Sigmoid colon (tissue), 7 donors: ENCODE measurements at regions of chr6 and their contacts with region 1.

Region 1: GRCh38 chr6:107674995-107675738 is 148.9 kb downstream of the SCML4 start:
- DNase-seq: peak; percentile 91
- H3K4me3 ChIP-seq: no peak overlapping the region
- H3K27ac ChIP-seq: no peak overlapping the region
- H3K4me1 ChIP-seq: peaks cover 0 to 18% (median 7%) of the 10 kb centered on the region in 4 donors
- H3K27me3 ChIP-seq: no peaks in the 10 kb centered on the region
- CTCF ChIP-seq: peak; percentile 66 to 90 (median 78)
- EP300 ChIP-seq: no peak
- POLR2A ChIP-seq: no peak

Region 2: GRCh38 chr6:107511511-107511993 is 163.6 kb before region 1 on chr6:
- intact Hi-C with region 1: no loop called
- DNase-seq: peak; percentile 74
- H3K4me3 ChIP-seq: no peak overlapping the region
- H3K27ac ChIP-seq: peak overlapping the region in 1 of 4 donors; percentile 16
- H3K4me1 ChIP-seq: peaks cover 0 to 18% (median 6%) of the 10 kb centered on the region in 4 donors
- H3K27me3 ChIP-seq: no peaks in the 10 kb centered on the region
- CTCF ChIP-seq: no peak
- EP300 ChIP-seq: no peak
- POLR2A ChIP-seq: no peak

Region 3: GRCh38 chr6:107704347-107705013 is 29.3 kb after region 1 on chr6:
- intact Hi-C with region 1: loop called (anchors 1 kb)
- DNase-seq: no peak
- H3K4me3 ChIP-seq: no peak overlapping the region
- H3K27ac ChIP-seq: no peak overlapping the region
- H3K4me1 ChIP-seq: peaks cover 0 to 3% (median 0%) of the 10 kb centered on the region in 4 donors
- H3K27me3 ChIP-seq: no peaks in the 10 kb centered on the region
- CTCF ChIP-seq: peak; percentile 43 to 85 (median 70)
- EP300 ChIP-seq: no peak
- POLR2A ChIP-seq: no peak

Region 4: GRCh38 chr6:107731422-107732319 is 56.5 kb after region 1 on chr6:
- intact Hi-C with region 1: no loop called
- DNase-seq: no peak
- H3K4me3 ChIP-seq: no peak overlapping the region
- H3K27ac ChIP-seq: no peak overlapping the region
- H3K4me1 ChIP-seq: no peaks in the 10 kb centered on the region
- H3K27me3 ChIP-seq: peaks cover 0 to 4% (median 0%) of the 10 kb centered on the region in 3 donors
- CTCF ChIP-seq: no peak
- EP300 ChIP-seq: no peak
- POLR2A ChIP-seq: no peak

Region 5: GRCh38 chr6:107847844-107848802 is 173.0 kb after region 1 on chr6:
- intact Hi-C with region 1: loop called (anchors 2 kb)
- DNase-seq: peak; percentile 91
- H3K4me3 ChIP-seq: peak overlapping the region; percentile 7 to 46 (median 42)
- H3K27ac ChIP-seq: no peak overlapping the region
- H3K4me1 ChIP-seq: peaks cover 0 to 13% (median 9%) of the 10 kb centered on the region in 4 donors
- H3K27me3 ChIP-seq: peaks cover 0 to 7% (median 0%) of the 10 kb centered on the region in 3 donors
- CTCF ChIP-seq: peak; percentile 33 to 97 (median 88)
- EP300 ChIP-seq: no peak
- POLR2A ChIP-seq: no peak